K562 (cell line): ENCODE measurements at regions of chr1 and their contacts with region 1.

Region 1: DNA sequence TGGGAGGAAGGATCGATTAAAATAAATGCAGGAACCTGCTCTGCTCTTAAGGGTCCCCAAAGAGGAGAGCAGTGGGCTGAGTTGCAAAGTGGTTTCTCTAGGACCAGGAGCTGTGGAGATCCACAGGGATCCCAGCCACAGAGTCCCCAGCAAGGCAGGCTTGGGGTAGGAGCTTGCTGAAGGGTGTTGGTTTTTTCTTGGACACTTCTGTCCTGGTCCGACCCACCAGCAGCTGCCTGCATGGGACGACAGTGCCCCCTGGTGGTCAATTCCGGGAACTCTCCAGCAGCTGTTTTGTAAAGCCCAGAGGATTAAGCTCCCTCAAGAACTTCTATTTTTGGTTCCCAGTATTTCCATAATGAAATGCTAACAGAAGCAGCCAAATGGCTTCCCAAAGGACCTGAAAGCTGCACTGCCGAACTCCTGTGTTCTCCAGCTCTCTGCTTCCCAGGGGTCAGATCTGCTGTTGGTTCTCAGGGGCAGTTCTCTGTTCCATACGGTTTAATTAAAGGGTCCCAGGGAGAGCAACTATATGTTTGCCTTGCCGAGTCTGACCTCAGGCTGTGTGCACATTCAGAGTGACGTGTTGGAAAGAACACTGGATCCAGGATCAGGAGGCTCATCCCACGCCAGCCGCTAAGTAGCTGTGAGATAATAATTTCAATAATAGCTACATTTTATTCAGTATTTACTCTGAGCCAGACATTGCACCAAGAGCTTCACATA is 23.2 kb downstream of the NENF start:
- DNase-seq: peak; percentile 87 to 91 (median 88)
- ATAC-seq: peak; percentile 87
- H3K4me3 ChIP-seq: no peak overlapping the region
- H3K27ac ChIP-seq: no peak overlapping the region
- H3K4me1 ChIP-seq: peaks cover 0 to 5% of the 10 kb centered on the region in 2 experiments; a peak in 2 of 5 replicates
- H3K27me3 ChIP-seq: peaks cover 0 to 4% of the 10 kb centered on the region in 2 experiments; a peak in 1 of 5 replicates
- CTCF ChIP-seq: peak; percentile 95 to 99 (median 99)
- EP300 ChIP-seq: no peak
- POLR2A ChIP-seq: no peak
- RAD21 ChIP-seq: peak; percentile 99 to 100

Region 2: GRCh38 chr1:211680752-211681327 is 775.1 kb before region 1 on chr1:
- CTCF ChIA-PET with region 1: interaction called, 15 read pairs
- POLR2A ChIA-PET with region 1: interaction called, 10 read pairs
- in situ Hi-C with region 1: loop called (anchors 5 kb)
- intact Hi-C with region 1: loop called (anchors 1 kb)
- DNase-seq: peak; percentile 78 to 92 (median 84)
- ATAC-seq: peak; percentile 82
- H3K4me3 ChIP-seq: no peak overlapping the region
- H3K27ac ChIP-seq: no peak overlapping the region
- H3K4me1 ChIP-seq: peaks cover 4 to 12% of the 10 kb centered on the region in 2 experiments; a peak in 4 of 5 replicates
- H3K27me3 ChIP-seq: peaks cover 7 to 27% of the 10 kb centered on the region in 2 experiments; a peak in 2 of 5 replicates
- CTCF ChIP-seq: peak; percentile 92 to 97 (median 97)
- EP300 ChIP-seq: 0 out of 2 replicates have a peak, but pooled peaks have one; percentile 15
- POLR2A ChIP-seq: no peak
- RAD21 ChIP-seq: peak; percentile 95 to 97

Region 3: GRCh38 chr1:212012034-212012740 is 443.8 kb before region 1 on chr1:
- CTCF ChIA-PET with region 1: interaction called, 10 read pairs
- POLR2A ChIA-PET with region 1: no interaction called
- in situ Hi-C with region 1: no loop called
- intact Hi-C with region 1: loop called (anchors 1 kb)
- DNase-seq: peak; percentile 77 to 82 (median 78)
- ATAC-seq: peak; percentile 97
- H3K4me3 ChIP-seq: no peak overlapping the region
- H3K27ac ChIP-seq: no peak overlapping the region
- H3K4me1 ChIP-seq: no peaks in the 10 kb centered on the region
- H3K27me3 ChIP-seq: no peaks in the 10 kb centered on the region
- CTCF ChIP-seq: peak; percentile 92 to 98 (median 95)
- EP300 ChIP-seq: 0 out of 2 replicates have a peak, but pooled peaks have one; percentile 16
- POLR2A ChIP-seq: no peak
- RAD21 ChIP-seq: peak; percentile 89 to 95

Region 4: GRCh38 chr1:212062832-212063438 is 393.0 kb before region 1 on chr1:
- CTCF ChIA-PET with region 1: interaction called, 15 read pairs
- POLR2A ChIA-PET with region 1: interaction called, 3 read pairs
- in situ Hi-C with region 1: no loop called
- intact Hi-C with region 1: no loop called
- DNase-seq: peak; percentile 39 to 51 (median 41)
- ATAC-seq: peak; percentile 77
- H3K4me3 ChIP-seq: no peak overlapping the region
- H3K27ac ChIP-seq: no peak overlapping the region
- H3K4me1 ChIP-seq: no peaks in the 10 kb centered on the region
- H3K27me3 ChIP-seq: no peaks in the 10 kb centered on the region
- CTCF ChIP-seq: peak; percentile 48 to 78 (median 65); a peak in 5 of 6 replicates
- EP300 ChIP-seq: no peak
- POLR2A ChIP-seq: no peak
- RAD21 ChIP-seq: peak; percentile 70 to 78

Region 5: GRCh38 chr1:212291505-212292134 is 164.3 kb before region 1 on chr1:
- CTCF ChIA-PET with region 1: interaction called, 4 read pairs
- POLR2A ChIA-PET with region 1: interaction called, 3 read pairs
- in situ Hi-C with region 1: no loop called
- intact Hi-C with region 1: loop called (anchors 2 kb)
- DNase-seq: peak; percentile 37 to 70 (median 51)
- ATAC-seq: peak; percentile 74
- H3K4me3 ChIP-seq: no peak overlapping the region
- H3K27ac ChIP-seq: no peak overlapping the region
- H3K4me1 ChIP-seq: peaks cover 6 to 50% of the 10 kb centered on the region in 2 experiments
- H3K27me3 ChIP-seq: no peaks in the 10 kb centered on the region
- CTCF ChIP-seq: peak; percentile 71 to 95 (median 78); a peak in 5 of 6 replicates
- EP300 ChIP-seq: no peak
- POLR2A ChIP-seq: no peak
- RAD21 ChIP-seq: peak; percentile 96 to 98

Region 6: DNA sequence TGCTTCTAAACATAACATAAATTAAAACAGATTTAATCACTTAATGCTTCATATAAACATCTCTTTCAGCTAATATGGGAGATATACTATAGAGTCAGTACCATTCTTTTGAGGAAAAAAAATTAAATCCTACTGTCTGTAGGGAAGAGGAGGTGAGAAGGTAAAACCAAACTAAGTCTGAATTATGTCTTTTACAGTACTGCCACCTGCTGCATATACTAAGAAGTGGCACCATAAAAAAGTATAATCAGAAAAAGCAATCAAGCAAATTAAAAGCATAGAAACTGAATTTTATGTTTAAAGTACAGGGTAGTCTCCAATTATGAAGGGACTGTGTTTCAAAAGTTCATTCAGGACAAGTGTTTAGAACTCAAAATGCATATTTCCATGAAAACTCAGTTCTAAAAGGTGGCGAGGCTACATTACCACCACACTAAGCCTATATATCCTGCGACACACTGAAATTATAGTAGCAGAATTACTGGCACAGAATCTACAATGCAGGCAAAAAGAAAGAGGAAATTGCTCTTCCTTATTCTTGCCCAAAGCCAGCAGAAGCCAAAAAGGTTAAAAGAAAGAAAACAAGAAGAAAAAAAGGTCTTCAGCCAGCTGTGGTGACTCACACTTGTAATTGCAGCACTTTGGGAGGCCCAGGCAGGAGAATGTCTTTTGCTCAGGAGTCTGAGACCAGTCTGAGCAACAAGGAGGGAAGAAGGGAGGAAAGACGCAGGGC is 326.6 kb after region 1 on chr1:
- CTCF ChIA-PET with region 1: interaction called, 7 read pairs
- POLR2A ChIA-PET with region 1: interaction called, 4 read pairs
- in situ Hi-C with region 1: no loop called
- intact Hi-C with region 1: loop called (anchors 5 kb)
- DNase-seq: peak in 1 of 4 experiments; percentile 23
- ATAC-seq: peak; percentile 84
- H3K4me3 ChIP-seq: no peak overlapping the region
- H3K27ac ChIP-seq: no peak overlapping the region
- H3K4me1 ChIP-seq: no peaks in the 10 kb centered on the region
- H3K27me3 ChIP-seq: no peaks in the 10 kb centered on the region
- CTCF ChIP-seq: peak in 2 of 3 experiments; percentile 50 to 81; a peak in 4 of 6 replicates
- EP300 ChIP-seq: no peak
- POLR2A ChIP-seq: no peak
- RAD21 ChIP-seq: peak; percentile 81 to 82